SK-N-SH (cell line): ENCODE measurements at regions of chr9 and their contacts with region 1.

Region 1: GRCh38 chr9:130143958-130144366 is 28.2 kb upstream of the NCS1 start:
- DNase-seq: no peak
- H3K4me3 ChIP-seq: no peak overlapping the region
- H3K27ac ChIP-seq: peak overlapping the region in 1 of 2 experiments; percentile 35; a peak in 1 of 4 replicates
- H3K4me1 ChIP-seq: peaks cover 8 to 22% of the 10 kb centered on the region in 2 experiments; a peak in 3 of 4 replicates
- H3K27me3 ChIP-seq: no peaks in the 10 kb centered on the region
- CTCF ChIP-seq: no peak
- EP300 ChIP-seq: no peak
- RAD21 ChIP-seq: no peak

Region 2: DNA sequence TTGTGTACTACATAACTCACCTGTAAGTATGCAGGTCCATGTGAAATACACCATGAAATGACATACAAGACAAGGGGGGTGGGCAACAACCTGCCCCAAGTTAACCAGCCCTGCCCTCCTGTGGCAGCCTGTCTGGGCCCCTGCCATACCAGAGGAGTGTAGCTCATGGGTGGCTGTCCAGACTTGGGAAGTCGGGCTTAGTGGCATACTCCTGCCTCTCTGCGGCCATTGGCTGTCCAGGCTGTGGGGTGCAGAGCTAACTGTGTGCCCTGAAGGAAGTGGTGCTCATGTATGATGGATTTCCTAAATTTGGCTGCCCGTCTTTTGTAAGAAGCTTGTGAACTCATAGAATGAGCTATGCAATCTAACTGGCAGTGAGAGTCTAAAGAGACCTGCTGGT is 43.3 kb before region 1 on chr9:
- CTCF ChIA-PET with region 1: no interaction called
- POLR2A ChIA-PET with region 1: no interaction called
- DNase-seq: no peak
- H3K4me3 ChIP-seq: no peak overlapping the region
- H3K27ac ChIP-seq: no peak overlapping the region
- H3K4me1 ChIP-seq: no peaks in the 10 kb centered on the region
- H3K27me3 ChIP-seq: no peaks in the 10 kb centered on the region
- CTCF ChIP-seq: no peak
- EP300 ChIP-seq: no peak
- RAD21 ChIP-seq: no peak

Region 3: DNA sequence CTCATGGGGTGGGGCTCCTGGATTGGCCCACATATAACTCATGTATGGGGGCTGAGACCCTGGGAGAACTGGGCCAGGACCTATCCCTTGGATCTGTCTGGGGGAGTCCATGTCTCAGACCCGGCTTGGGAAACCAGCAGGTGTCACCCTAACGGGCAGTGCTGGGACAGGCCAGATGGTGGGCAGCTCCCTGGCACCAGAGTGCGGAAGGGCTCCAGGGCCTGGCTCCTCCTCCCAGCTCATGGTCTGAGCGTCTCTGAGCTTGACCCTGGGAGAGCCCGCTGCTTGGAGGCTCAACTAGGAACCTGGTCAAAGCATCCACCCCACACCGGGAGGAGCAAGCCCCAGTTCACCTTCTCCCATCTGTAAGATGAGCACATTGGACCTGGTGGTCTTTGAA is 12.7 kb after region 1 on chr9:
- CTCF ChIA-PET with region 1: interaction called, 12 read pairs
- POLR2A ChIA-PET with region 1: no interaction called
- DNase-seq: peak; percentile 70
- H3K4me3 ChIP-seq: no peak overlapping the region
- H3K27ac ChIP-seq: no peak overlapping the region
- H3K4me1 ChIP-seq: no peaks in the 10 kb centered on the region; a peak in 1 of 4 replicates
- H3K27me3 ChIP-seq: no peaks in the 10 kb centered on the region
- CTCF ChIP-seq: peak; percentile 33; the same call in 1 of the 2 replicates
- EP300 ChIP-seq: no peak
- RAD21 ChIP-seq: peak; percentile 55